Ascending aorta (tissue), 2 donors: ENCODE measurements at regions of chr2 and their contacts with region 1.

Region 1: DNA sequence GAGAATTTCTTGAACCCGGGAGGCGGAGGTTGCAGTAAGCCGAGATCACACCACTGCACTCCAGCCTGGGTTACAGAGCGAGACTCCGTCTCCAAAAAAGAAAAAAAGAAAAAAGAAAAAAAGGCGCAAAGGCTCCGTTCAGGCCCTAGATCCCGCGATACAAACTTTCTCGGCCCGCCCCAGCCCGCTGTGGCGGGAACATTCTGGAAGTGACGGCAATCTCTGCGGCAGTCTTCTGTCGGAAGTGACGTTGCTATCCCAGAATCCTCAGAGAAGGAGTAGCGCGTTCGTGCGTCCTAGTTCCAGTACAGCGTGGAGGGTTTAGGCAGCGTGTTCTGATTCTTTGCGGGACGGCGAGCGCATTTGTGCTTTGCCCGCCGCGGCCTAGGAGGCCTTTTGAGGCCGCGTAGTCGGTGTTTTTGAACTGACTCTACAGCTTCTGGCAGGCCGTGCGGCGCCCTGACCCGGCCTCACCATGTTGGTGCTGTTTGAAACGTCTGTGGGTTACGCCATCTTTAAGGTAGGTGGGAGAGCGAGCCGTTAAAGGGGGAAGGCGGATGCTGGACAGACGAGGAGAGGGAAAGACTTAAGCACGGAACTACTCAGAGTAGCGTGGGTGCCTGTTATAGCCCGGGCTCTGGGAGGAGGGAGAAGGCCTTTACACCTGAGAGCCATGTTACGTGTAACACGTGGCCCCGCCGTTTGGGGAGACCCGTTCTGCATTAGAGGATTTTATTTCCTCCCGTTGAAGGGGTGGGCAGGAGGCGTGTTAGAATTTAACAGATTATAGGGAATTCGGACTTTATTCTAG is at the start of gene NOP58:
- DNase-seq: peak; percentile 74 to 97
- H3K4me3 ChIP-seq: peak within 1 kb of the TSS; percentile 96 to 97
- H3K27ac ChIP-seq: peak within 1 kb of the TSS; percentile 94 to 97
- H3K4me1 ChIP-seq: peaks cover 0 to 9% of the 10 kb centered on the region in 2 donors
- H3K27me3 ChIP-seq: no peaks in the 10 kb centered on the region
- CTCF ChIP-seq: no peak
- total RNA-seq, gene NOP58: 65.8 TPM

Region 2: DNA sequence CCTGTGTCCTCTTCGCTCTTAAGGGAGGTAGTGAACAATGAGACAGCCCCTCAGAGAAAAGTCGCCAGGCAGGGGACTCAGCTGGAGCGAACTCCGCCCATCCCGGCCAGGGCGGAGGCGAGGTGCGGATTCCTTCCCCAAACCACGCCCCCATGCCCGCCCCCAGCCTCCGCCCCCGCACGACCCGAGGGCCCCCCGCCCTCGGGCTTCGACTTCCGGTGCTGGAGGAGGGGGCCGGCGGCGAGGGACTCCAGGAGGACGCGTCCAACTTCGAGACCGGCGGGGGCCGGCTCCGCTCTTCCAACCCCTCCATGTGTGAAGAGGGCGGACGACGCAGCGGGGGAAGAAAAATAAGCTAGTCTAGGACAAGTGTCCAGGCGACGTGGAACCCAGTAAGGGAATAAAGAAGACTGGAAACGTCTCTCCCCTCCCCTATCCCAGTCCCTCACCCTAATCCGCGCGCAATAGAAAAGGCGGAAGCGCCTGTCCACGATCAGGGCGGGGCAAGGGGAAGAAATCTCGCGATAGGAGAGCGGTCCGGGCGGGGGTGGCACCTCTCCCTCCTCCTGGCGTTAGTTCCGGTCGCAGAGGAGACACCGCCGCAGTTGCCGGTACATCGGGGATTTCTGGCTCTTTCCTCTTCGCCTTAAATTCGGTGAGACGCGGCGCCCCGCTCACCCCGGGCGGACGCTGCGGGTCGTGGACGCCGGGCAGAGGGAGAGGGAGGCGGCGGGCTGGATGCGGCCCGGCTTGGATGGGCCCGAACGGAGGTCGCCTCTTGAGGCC is 1454.1 kb before region 1 on chr2 and contains the start of gene BZW1:
- intact Hi-C with region 1: no loop called
- DNase-seq: peak; percentile 77 to 96
- H3K4me3 ChIP-seq: peak within 1 kb of the TSS; percentile 81 to 97
- H3K27ac ChIP-seq: peak within 1 kb of the TSS; percentile 98
- H3K4me1 ChIP-seq: peaks cover 6 to 40% of the 10 kb centered on the region in 2 donors
- H3K27me3 ChIP-seq: no peaks in the 10 kb centered on the region
- CTCF ChIP-seq: no peak
- total RNA-seq, gene BZW1: 85.4 TPM

Region 3: GRCh38 chr2:201118121-201118960 is 1147.3 kb before region 1 on chr2:
- intact Hi-C with region 1: loop called (anchors 10 kb)
- DNase-seq: peak; percentile 55 to 91
- H3K4me3 ChIP-seq: peak overlapping the region; percentile 77 to 85
- H3K27ac ChIP-seq: peak overlapping the region; percentile 99
- H3K4me1 ChIP-seq: peaks cover 3 to 16% of the 10 kb centered on the region in 2 donors
- H3K27me3 ChIP-seq: no peaks in the 10 kb centered on the region
- CTCF ChIP-seq: peak in 2 of 3 experiments; percentile 3 to 53

Region 4: GRCh38 chr2:201654616-201655384 is 610.9 kb before region 1 on chr2:
- intact Hi-C with region 1: loop called (anchors 5 kb)
- DNase-seq: no peak
- H3K4me3 ChIP-seq: no peak overlapping the region
- H3K27ac ChIP-seq: peak overlapping the region; percentile 2 to 54
- H3K4me1 ChIP-seq: no peaks in the 10 kb centered on the region
- H3K27me3 ChIP-seq: no peaks in the 10 kb centered on the region
- CTCF ChIP-seq: no peak

Region 5: GRCh38 chr2:202238234-202239197 is 27.2 kb before region 1 on chr2 and contains the start of gene SUMO1:
- intact Hi-C with region 1: loop called (anchors 1 kb)
- DNase-seq: peak; percentile 82 to 95
- H3K4me3 ChIP-seq: peak within 1 kb of the TSS; percentile 89 to 93
- H3K27ac ChIP-seq: peak within 1 kb of the TSS; percentile 88
- H3K4me1 ChIP-seq: peaks cover 0 to 13% of the 10 kb centered on the region in 2 donors
- H3K27me3 ChIP-seq: no peaks in the 10 kb centered on the region
- CTCF ChIP-seq: peak in 1 of 3 experiments; percentile 15
- total RNA-seq, gene SUMO1: 208 TPM